Right cardiac atrium (tissue), 5 donors: ENCODE measurements at regions of chr1 and their contacts with region 1.

Region 1: GRCh38 chr1:208245185-208245705 is 1.1 kb upstream of the PLXNA2 start:
- DNase-seq: peak; percentile 93 to 97 (median 93)
- ATAC-seq: peak; percentile 85 to 87
- H3K4me3 ChIP-seq: peak overlapping the region; percentile 96
- H3K27ac ChIP-seq: peak overlapping the region; percentile 37
- H3K4me1 ChIP-seq: peaks cover 6% of the 10 kb centered on the region
- H3K27me3 ChIP-seq: no peaks in the 10 kb centered on the region

Region 2: GRCh38 chr1:208024406-208024805 is 220.8 kb before region 1 on chr1:
- intact Hi-C with region 1: loop called (anchors 2 to 10 kb)
- DNase-seq: no peak
- ATAC-seq: no peak
- H3K4me3 ChIP-seq: no peak overlapping the region
- H3K27ac ChIP-seq: no peak overlapping the region
- H3K4me1 ChIP-seq: no peaks in the 10 kb centered on the region
- H3K27me3 ChIP-seq: no peaks in the 10 kb centered on the region

Region 3: GRCh38 chr1:208029381-208030287 is 215.6 kb before region 1 on chr1:
- intact Hi-C with region 1: loop called in 3 of 4 experiments (anchors 5 to 10 kb)
- DNase-seq: peak in 1 of 3 donors; percentile 46
- ATAC-seq: peak; percentile 62 to 67
- H3K4me3 ChIP-seq: no peak overlapping the region
- H3K27ac ChIP-seq: peak overlapping the region; percentile 82
- H3K4me1 ChIP-seq: peaks cover 2% of the 10 kb centered on the region
- H3K27me3 ChIP-seq: no peaks in the 10 kb centered on the region

Region 4: GRCh38 chr1:208101661-208102431 is 143.4 kb before region 1 on chr1:
- intact Hi-C with region 1: loop called in 1 of 4 experiments (anchors 5 kb)
- DNase-seq: peak; percentile 63 to 78 (median 74)
- ATAC-seq: peak; percentile 53 to 61
- H3K4me3 ChIP-seq: no peak overlapping the region
- H3K27ac ChIP-seq: no peak overlapping the region
- H3K4me1 ChIP-seq: peaks cover 8% of the 10 kb centered on the region
- H3K27me3 ChIP-seq: no peaks in the 10 kb centered on the region

Region 5: GRCh38 chr1:208132287-208132883 is 112.9 kb before region 1 on chr1:
- intact Hi-C with region 1: loop called in 3 of 4 experiments (anchors 5 to 10 kb)
- DNase-seq: peak; percentile 86 to 94 (median 94)
- ATAC-seq: peak; percentile 88 to 94
- H3K4me3 ChIP-seq: no peak overlapping the region
- H3K27ac ChIP-seq: no peak overlapping the region
- H3K4me1 ChIP-seq: peaks cover 2% of the 10 kb centered on the region
- H3K27me3 ChIP-seq: no peaks in the 10 kb centered on the region

Region 6: DNA sequence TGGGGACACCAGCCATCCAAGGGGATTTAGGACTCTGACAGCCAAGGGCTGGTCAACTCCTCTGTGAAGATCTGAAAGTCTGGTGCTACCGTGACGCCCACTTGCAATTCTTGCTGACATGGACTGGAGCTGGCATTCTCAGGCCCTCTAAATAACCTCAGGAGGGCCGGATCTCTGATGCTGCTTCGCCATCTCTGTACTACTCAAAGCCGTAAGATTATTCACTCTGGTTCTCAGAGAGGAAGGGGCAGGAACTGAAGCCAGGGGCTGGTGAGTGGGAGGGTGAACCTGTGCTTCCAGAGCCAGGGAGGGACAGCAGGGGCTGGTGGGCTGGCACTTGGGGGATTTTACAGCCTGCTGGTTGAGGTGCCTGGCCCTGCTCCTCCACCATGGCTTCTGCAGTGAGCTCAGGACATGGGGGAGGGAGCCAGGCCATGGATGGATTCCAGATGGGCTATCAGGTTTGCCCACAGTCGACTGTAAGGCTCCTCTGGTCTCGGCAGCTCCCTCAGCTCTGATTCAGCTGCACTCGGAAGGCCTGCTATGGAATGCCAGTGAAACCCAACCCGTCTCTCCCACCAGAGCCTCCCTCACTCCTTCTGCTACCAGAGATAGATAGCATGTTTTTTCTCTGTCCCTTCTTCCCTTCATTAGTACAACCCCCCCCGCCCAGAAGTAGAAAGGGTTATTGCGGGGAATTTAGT is 85.5 kb before region 1 on chr1:
- intact Hi-C with region 1: loop called in 1 of 4 experiments (anchors 10 kb)
- DNase-seq: peak; percentile 35 to 76 (median 74)
- ATAC-seq: peak; percentile 35 to 42
- H3K4me3 ChIP-seq: no peak overlapping the region
- H3K27ac ChIP-seq: peak overlapping the region; percentile 30
- H3K4me1 ChIP-seq: peaks cover 29% of the 10 kb centered on the region
- H3K27me3 ChIP-seq: no peaks in the 10 kb centered on the region